CD4-positive, alpha-beta T cell (primary cell): ENCODE measurements at regions of chr7 and their contacts with region 1.

Region 1: DNA sequence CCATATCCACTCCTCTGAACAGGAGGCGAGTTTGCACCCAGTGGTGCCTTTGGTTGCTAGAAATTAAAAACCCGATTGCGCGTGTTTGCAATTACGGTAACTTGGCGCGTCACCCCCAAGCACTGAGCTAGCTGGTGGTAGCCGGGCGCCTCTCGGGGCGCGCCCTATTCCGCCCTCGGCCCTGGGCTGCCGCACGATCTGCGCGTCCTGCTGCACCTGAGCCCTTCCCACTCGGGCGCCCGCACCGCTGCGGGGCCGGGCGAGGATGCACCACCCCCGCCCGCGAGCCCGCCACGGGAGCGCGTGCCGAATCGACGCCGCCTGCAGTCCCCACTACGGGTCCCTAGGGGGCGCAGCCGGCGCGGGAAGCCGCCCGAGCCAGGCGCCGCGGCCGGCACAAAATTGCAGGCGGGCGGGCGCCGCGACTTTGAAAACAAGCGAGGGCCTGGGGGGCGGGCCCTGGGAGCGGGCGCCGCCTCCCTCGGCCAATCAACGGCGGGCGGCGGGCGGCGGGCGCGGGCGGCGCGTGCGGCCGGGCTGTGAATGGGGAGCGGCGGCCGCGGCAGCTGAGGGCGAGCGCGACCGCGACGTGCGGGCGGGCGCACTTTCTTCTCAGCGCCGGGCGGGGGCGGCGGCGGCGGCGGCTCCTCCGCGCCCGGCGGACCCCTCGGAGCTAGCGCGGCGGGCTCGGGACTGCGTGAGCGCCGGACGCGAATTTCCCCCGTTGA is at the start of gene SDK1:
- DNase-seq: peak; percentile 79 to 95 (median 90)
- ATAC-seq: peak; percentile 87
- H3K4me3 ChIP-seq: peak within 1 kb of the TSS; percentile 51
- H3K4me3 Mint-ChIP-seq: peak within 1 kb of the TSS; percentile 96
- H3K27ac ChIP-seq: no peak within 1 kb of the TSS
- H3K27ac Mint-ChIP-seq: peak within 1 kb of the TSS; percentile 60
- H3K4me1 ChIP-seq: peaks cover 18% of the 10 kb centered on the region
- H3K4me1 Mint-ChIP-seq: peaks cover 13% of the 10 kb centered on the region
- H3K27me3 ChIP-seq: peaks cover 7 to 9% of the 10 kb centered on the region in 2 experiments
- H3K27me3 Mint-ChIP-seq: peaks cover 18% of the 10 kb centered on the region
- CTCF ChIP-seq: peak; percentile 72
- total RNA-seq, gene SDK1: 1.1 to 1.3 TPM

Region 2: GRCh38 chr7:2232766-2233520 is 1067.9 kb before region 1 on chr7 and contains the start of gene MAD1L1:
- CTCF ChIA-PET with region 1: no interaction called
- POLR2A ChIA-PET with region 1: no interaction called
- intact Hi-C with region 1: loop called in 1 of 2 experiments (anchors 5 kb)
- DNase-seq: peak; percentile 81 to 94 (median 86)
- ATAC-seq: peak; percentile 91
- H3K4me3 ChIP-seq: peak within 1 kb of the TSS; percentile 78
- H3K4me3 Mint-ChIP-seq: peak within 1 kb of the TSS; percentile 94
- H3K27ac ChIP-seq: peak within 1 kb of the TSS in 1 of 2 donors; percentile 67
- H3K27ac Mint-ChIP-seq: peak within 1 kb of the TSS; percentile 70
- H3K4me1 ChIP-seq: peaks cover 34% of the 10 kb centered on the region
- H3K4me1 Mint-ChIP-seq: peaks cover 36% of the 10 kb centered on the region
- H3K27me3 ChIP-seq: no peaks in the 10 kb centered on the region
- H3K27me3 Mint-ChIP-seq: no peaks in the 10 kb centered on the region
- CTCF ChIP-seq: no peak
- total RNA-seq, gene MAD1L1: 157 to 160 TPM

Region 3: GRCh38 chr7:2844165-2844898 is 456.5 kb before region 1 on chr7 and contains the start of gene GNA12:
- CTCF ChIA-PET with region 1: no interaction called
- POLR2A ChIA-PET with region 1: no interaction called
- intact Hi-C with region 1: loop called in 1 of 2 experiments (anchors 10 kb)
- DNase-seq: peak; percentile 94 to 99 (median 98)
- ATAC-seq: peak; percentile 94
- H3K4me3 ChIP-seq: peak within 1 kb of the TSS; percentile 67
- H3K4me3 Mint-ChIP-seq: peak within 1 kb of the TSS; percentile 93
- H3K27ac ChIP-seq: peak within 1 kb of the TSS in 1 of 2 donors; percentile 5
- H3K27ac Mint-ChIP-seq: peak within 1 kb of the TSS; percentile 76
- H3K4me1 ChIP-seq: peaks cover 20% of the 10 kb centered on the region
- H3K4me1 Mint-ChIP-seq: peaks cover 49% of the 10 kb centered on the region
- H3K27me3 ChIP-seq: no peaks in the 10 kb centered on the region
- H3K27me3 Mint-ChIP-seq: no peaks in the 10 kb centered on the region
- CTCF ChIP-seq: no peak
- total RNA-seq, gene GNA12: 16.0 to 16.1 TPM

Region 4: GRCh38 chr7:3042861-3043489 is 257.8 kb before region 1 on chr7:
- CTCF ChIA-PET with region 1: no interaction called
- POLR2A ChIA-PET with region 1: no interaction called
- intact Hi-C with region 1: loop called in 1 of 2 experiments (anchors 10 kb)
- DNase-seq: peak; percentile 23 to 86 (median 66)
- ATAC-seq: peak; percentile 75
- H3K4me3 ChIP-seq: peak overlapping the region; percentile 89
- H3K4me3 Mint-ChIP-seq: peak overlapping the region; percentile 93
- H3K27ac ChIP-seq: peak overlapping the region; percentile 74 to 99
- H3K27ac Mint-ChIP-seq: peak overlapping the region; percentile 85
- H3K4me1 ChIP-seq: peaks cover 60% of the 10 kb centered on the region
- H3K4me1 Mint-ChIP-seq: peaks cover 70% of the 10 kb centered on the region
- H3K27me3 ChIP-seq: no peaks in the 10 kb centered on the region
- H3K27me3 Mint-ChIP-seq: no peaks in the 10 kb centered on the region
- CTCF ChIP-seq: no peak

Region 5: GRCh38 chr7:3065724-3066143 is 235.1 kb before region 1 on chr7:
- CTCF ChIA-PET with region 1: no interaction called
- POLR2A ChIA-PET with region 1: no interaction called
- intact Hi-C with region 1: no loop called
- DNase-seq: peak in 13 of 14 experiments; percentile 44 to 82 (median 52)
- ATAC-seq: peak; percentile 36
- H3K4me3 ChIP-seq: no peak overlapping the region
- H3K4me3 Mint-ChIP-seq: peak overlapping the region; percentile 56
- H3K27ac ChIP-seq: peak overlapping the region in 1 of 2 donors; percentile 18
- H3K27ac Mint-ChIP-seq: peak overlapping the region; percentile 86
- H3K4me1 ChIP-seq: peaks cover 82% of the 10 kb centered on the region
- H3K4me1 Mint-ChIP-seq: peaks cover 84% of the 10 kb centered on the region
- H3K27me3 ChIP-seq: no peaks in the 10 kb centered on the region
- H3K27me3 Mint-ChIP-seq: no peaks in the 10 kb centered on the region
- CTCF ChIP-seq: peak; percentile 70

Region 6: GRCh38 chr7:3461923-3462322 is 161.1 kb after region 1 on chr7:
- CTCF ChIA-PET with region 1: no interaction called
- POLR2A ChIA-PET with region 1: interaction called, 3 read pairs
- intact Hi-C with region 1: loop called (anchors 2 kb)
- DNase-seq: peak; percentile 45 to 88 (median 64)
- ATAC-seq: peak; percentile 90
- H3K4me3 ChIP-seq: no peak overlapping the region
- H3K4me3 Mint-ChIP-seq: peak overlapping the region; percentile 56
- H3K27ac ChIP-seq: peak overlapping the region; percentile 18 to 46
- H3K27ac Mint-ChIP-seq: peak overlapping the region; percentile 87
- H3K4me1 ChIP-seq: peaks cover 15% of the 10 kb centered on the region
- H3K4me1 Mint-ChIP-seq: peaks cover 59% of the 10 kb centered on the region
- H3K27me3 ChIP-seq: no peaks in the 10 kb centered on the region
- H3K27me3 Mint-ChIP-seq: no peaks in the 10 kb centered on the region
- CTCF ChIP-seq: peak; percentile 14

Region 7: DNA sequence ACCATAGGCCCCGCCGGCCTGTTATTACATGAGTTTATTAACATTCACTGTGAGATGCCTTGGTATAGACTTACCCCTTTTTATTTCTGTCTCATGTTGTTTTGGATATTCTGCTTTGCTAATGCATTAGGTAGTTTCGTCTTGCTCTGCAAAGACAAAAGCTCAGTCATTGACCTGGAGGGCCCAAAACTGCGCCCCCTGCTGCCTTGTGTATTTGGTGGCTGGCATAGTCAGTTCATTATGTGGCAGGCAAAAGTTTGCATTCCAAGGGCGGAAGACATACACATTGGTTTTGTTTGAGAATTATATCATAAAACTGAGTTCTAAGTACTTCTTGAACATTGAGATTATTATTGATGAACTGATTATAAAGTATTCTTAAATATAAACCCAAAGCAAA is 372.7 kb after region 1 on chr7:
- CTCF ChIA-PET with region 1: interaction called, 5 read pairs
- POLR2A ChIA-PET with region 1: interaction called, 3 read pairs
- intact Hi-C with region 1: loop called (anchors 2 kb)
- DNase-seq: peak; percentile 32 to 72 (median 47)
- ATAC-seq: no peak
- H3K4me3 ChIP-seq: no peak overlapping the region
- H3K4me3 Mint-ChIP-seq: no peak overlapping the region
- H3K27ac ChIP-seq: no peak overlapping the region
- H3K27ac Mint-ChIP-seq: no peak overlapping the region
- H3K4me1 ChIP-seq: no peaks in the 10 kb centered on the region
- H3K4me1 Mint-ChIP-seq: peaks cover 8% of the 10 kb centered on the region
- H3K27me3 ChIP-seq: no peaks in the 10 kb centered on the region
- H3K27me3 Mint-ChIP-seq: no peaks in the 10 kb centered on the region
- CTCF ChIP-seq: peak; percentile 53

Region 8: DNA sequence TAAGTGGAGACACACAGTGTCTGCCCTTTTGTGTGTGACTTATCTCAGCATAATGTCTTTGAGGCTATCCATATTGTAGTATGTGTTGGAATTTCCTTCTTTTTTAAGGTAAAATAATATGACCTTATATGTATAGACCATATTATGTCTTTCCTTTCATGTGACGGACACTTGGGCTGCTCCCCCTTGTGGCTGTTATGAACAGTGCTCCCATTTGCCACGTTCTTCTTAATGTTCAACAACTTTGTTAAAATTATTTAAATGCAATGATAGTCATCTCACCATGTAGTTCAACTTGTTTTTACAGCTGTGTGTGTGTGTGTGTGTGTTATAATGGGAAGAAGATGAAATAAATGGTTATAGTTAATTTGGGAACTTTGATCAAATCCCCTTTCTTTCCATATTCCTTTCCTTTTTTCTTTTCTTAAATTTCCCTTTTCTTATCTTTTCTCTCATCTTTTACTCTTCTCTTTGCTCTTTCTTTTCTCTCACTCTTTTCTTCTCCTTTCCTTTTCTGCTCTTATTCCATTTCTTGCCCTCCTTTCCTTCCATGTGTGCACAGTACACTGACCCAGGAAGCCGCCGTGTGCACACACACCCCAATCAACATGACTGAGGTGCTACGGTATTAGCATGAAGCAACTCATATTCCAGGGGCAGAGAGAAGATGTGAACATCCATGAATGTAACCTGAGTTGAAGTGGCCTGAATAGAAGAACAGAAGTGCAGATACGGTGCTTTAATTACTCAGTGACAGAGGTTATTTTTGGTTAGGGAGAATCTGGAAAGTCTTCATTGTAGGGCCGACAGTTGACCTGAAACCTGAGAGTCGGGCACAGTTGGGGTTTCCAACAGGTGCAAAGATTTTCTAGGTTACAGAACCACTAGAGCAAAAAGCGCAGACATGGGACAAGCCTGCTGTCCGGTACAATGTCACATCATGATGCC is 596.9 kb after region 1 on chr7:
- CTCF ChIA-PET with region 1: no interaction called
- POLR2A ChIA-PET with region 1: no interaction called
- intact Hi-C with region 1: loop called (anchors 1 kb)
- DNase-seq: peak; percentile 13 to 75 (median 32)
- ATAC-seq: peak; percentile 52
- H3K4me3 ChIP-seq: no peak overlapping the region
- H3K4me3 Mint-ChIP-seq: no peak overlapping the region
- H3K27ac ChIP-seq: no peak overlapping the region
- H3K27ac Mint-ChIP-seq: no peak overlapping the region
- H3K4me1 ChIP-seq: no peaks in the 10 kb centered on the region
- H3K4me1 Mint-ChIP-seq: no peaks in the 10 kb centered on the region
- H3K27me3 ChIP-seq: no peaks in the 10 kb centered on the region
- H3K27me3 Mint-ChIP-seq: no peaks in the 10 kb centered on the region
- CTCF ChIP-seq: peak; percentile 79